Naive thymus-derived CD4-positive, alpha-beta T cell (primary cell): ENCODE measurements at regions of chr7 and their contacts with region 1.

Region 1: GRCh38 chr7:25125137-25125946 is at the start of gene CYCS:
- DNase-seq: peak; percentile 97 to 100 (median 99)
- ATAC-seq: peak; percentile 96
- H3K4me3 ChIP-seq: peak within 1 kb of the TSS; percentile 74
- H3K4me3 Mint-ChIP-seq: peak within 1 kb of the TSS; percentile 88 to 100 (median 100)
- H3K27ac ChIP-seq: peak within 1 kb of the TSS; percentile 93
- H3K27ac Mint-ChIP-seq: peak within 1 kb of the TSS; percentile 98 to 100 (median 100)
- H3K4me1 ChIP-seq: peaks cover 7 to 13% of the 10 kb centered on the region in 2 donors
- H3K4me1 Mint-ChIP-seq: peaks cover 15 to 40% (median 23%) of the 10 kb centered on the region in 7 donors
- H3K27me3 ChIP-seq: no peaks in the 10 kb centered on the region
- H3K27me3 Mint-ChIP-seq: peaks cover 0 to 5% (median 0%) of the 10 kb centered on the region in 5 donors
- total RNA-seq, gene CYCS: 40.4 to 130 (median 114) TPM

Region 2: DNA sequence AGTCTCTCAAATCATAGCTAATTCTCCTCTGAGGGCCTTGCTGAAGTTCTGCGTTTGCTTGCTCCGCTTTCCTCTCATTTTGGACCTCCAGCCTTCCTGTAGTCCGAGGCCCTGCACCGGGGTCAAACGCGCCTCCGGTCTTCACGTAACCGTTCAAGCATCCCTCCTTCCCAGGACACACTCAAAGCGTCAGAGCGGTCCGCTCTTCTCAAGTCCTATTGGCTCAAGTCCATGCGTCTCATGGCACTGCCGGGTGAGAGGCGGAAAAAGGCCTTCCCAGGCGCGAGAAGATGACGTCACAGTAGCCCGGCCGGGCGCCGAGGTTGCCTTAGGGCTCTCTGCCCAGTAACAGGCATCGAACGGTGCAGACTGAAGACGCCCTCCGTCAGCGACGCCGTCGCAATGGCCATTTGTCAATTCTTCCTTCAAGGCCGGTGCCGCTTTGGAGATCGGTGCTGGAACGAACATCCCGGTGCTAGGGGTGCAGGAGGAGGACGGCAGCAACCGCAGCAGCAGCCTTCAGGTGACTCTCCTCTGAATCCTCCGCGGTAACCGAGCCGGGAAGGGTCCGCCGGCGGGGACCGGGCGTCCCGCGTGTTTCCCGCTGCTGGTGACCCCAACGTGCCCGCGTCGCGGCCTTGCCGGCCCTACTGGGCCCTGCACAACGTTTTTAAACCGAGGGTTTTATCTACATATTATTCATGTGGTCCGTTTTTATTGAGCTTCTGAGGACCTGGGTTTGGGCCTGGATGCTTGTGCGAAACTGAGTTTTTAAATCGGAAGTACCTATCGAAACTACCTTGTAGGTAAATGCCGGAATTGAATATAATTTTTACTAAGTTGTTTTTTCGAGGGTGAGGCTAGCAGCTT is 1943.4 kb before region 1 on chr7 and contains the start of gene NUP42:
- CTCF ChIA-PET with region 1: no interaction called
- POLR2A ChIA-PET with region 1: no interaction called
- intact Hi-C with region 1: loop called in 1 of 2 experiments (anchors 2 kb)
- DNase-seq: peak; percentile 87 to 95 (median 93)
- ATAC-seq: peak; percentile 97
- H3K4me3 ChIP-seq: peak within 1 kb of the TSS; percentile 86
- H3K4me3 Mint-ChIP-seq: peak within 1 kb of the TSS; percentile 95 to 100 (median 98)
- H3K27ac ChIP-seq: peak within 1 kb of the TSS; percentile 85
- H3K27ac Mint-ChIP-seq: peak within 1 kb of the TSS; percentile 97 to 99 (median 98)
- H3K4me1 ChIP-seq: peaks cover 16 to 17% of the 10 kb centered on the region in 2 donors
- H3K4me1 Mint-ChIP-seq: peaks cover 20 to 50% (median 43%) of the 10 kb centered on the region in 7 donors
- H3K27me3 ChIP-seq: no peaks in the 10 kb centered on the region
- H3K27me3 Mint-ChIP-seq: peaks cover 0 to 16% (median 0%) of the 10 kb centered on the region in 5 donors
- total RNA-seq, gene NUP42: 19.8 to 37.7 (median 27.5) TPM

Region 3: DNA sequence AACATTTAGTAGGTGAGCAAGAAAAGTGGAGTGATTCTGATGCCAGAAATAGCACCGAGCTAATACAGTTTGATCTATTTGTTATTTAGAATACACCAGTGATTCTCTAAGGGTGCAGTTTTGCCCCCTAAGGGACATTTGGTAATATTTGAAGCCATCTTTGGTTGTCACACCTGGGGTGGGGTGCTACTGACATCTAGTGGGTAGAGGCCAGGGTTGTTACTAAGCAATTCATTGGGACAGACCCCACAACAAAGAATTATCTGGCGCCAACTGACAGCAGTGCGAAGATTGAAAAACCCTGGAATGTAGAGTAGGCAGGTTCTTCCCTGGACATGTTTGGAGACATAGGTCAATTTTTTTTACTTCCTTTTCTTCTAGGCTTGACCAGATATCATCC is 537.5 kb before region 1 on chr7:
- CTCF ChIA-PET with region 1: interaction called, 10 read pairs
- POLR2A ChIA-PET with region 1: no interaction called
- intact Hi-C with region 1: no loop called
- DNase-seq: peak in 8 of 9 donors; percentile 21 to 70 (median 63)
- ATAC-seq: peak; percentile 88
- H3K4me3 ChIP-seq: no peak overlapping the region
- H3K4me3 Mint-ChIP-seq: no peak overlapping the region
- H3K27ac ChIP-seq: no peak overlapping the region
- H3K27ac Mint-ChIP-seq: peak overlapping the region in 2 of 9 donors; percentile 0 to 26
- H3K4me1 ChIP-seq: no peaks in the 10 kb centered on the region
- H3K4me1 Mint-ChIP-seq: peaks cover 7 to 40% (median 27%) of the 10 kb centered on the region in 7 donors
- H3K27me3 ChIP-seq: no peaks in the 10 kb centered on the region
- H3K27me3 Mint-ChIP-seq: no peaks in the 10 kb centered on the region

Region 4: DNA sequence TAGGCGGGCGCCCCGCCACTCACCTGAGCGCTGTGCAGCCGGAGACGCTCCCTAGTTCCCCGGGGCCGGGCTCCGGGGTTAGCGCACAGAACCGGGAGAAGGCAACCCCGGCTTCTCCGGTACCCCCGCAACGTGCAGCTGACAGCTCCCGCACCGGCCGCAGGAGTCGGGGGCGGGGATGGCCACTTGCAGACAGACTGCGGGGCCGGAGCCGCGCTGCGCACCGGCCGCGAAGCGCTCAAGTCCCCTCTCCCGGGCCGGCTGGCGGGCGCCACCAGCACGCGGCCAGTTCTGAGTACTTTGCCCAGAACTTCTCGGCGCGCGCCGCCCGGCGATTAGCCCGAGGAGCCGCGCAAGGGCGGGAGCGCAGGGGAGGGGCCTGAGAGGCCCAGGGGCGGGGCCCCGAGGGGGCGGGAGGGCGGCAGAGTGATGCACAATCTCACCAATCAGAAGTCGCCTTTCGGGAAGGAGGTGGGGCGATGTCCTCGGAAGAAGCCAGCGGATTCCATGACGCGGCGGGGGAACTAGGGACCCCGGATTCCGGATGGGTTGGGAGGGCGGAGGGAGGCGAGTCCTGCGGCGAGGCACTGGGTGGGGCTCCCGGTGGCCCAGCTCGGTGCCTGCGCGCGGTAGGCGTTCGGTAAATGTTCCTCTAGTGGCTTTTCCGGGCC is 145.3 kb before region 1 on chr7 and contains the start of gene OSBPL3:
- CTCF ChIA-PET with region 1: no interaction called
- POLR2A ChIA-PET with region 1: interaction called, 5 read pairs
- intact Hi-C with region 1: loop called (anchors 1 to 2 kb)
- DNase-seq: peak; percentile 86 to 96 (median 93)
- ATAC-seq: peak; percentile 95
- H3K4me3 ChIP-seq: peak within 1 kb of the TSS; percentile 84
- H3K4me3 Mint-ChIP-seq: peak within 1 kb of the TSS; percentile 93 to 97 (median 96)
- H3K27ac ChIP-seq: peak within 1 kb of the TSS; percentile 69
- H3K27ac Mint-ChIP-seq: peak within 1 kb of the TSS; percentile 73 to 95 (median 89)
- H3K4me1 ChIP-seq: peaks cover 26 to 32% of the 10 kb centered on the region in 2 donors
- H3K4me1 Mint-ChIP-seq: peaks cover 40 to 65% (median 56%) of the 10 kb centered on the region in 7 donors
- H3K27me3 ChIP-seq: no peaks in the 10 kb centered on the region
- H3K27me3 Mint-ChIP-seq: peaks cover 0 to 4% (median 0%) of the 10 kb centered on the region in 5 donors
- total RNA-seq, gene OSBPL3: 17.1 to 75.7 (median 22.7) TPM

Region 5: GRCh38 chr7:25179771-25180591 is 54.6 kb after region 1 on chr7:
- CTCF ChIA-PET with region 1: interaction called, 4 read pairs
- POLR2A ChIA-PET with region 1: interaction called, 13 read pairs
- intact Hi-C with region 1: loop called (anchors 1 kb)
- DNase-seq: peak; percentile 88 to 99 (median 94)
- ATAC-seq: peak; percentile 99
- H3K4me3 ChIP-seq: peak overlapping the region; percentile 75
- H3K4me3 Mint-ChIP-seq: peak overlapping the region; percentile 82 to 93 (median 88)
- H3K27ac ChIP-seq: peak overlapping the region; percentile 86
- H3K27ac Mint-ChIP-seq: peak overlapping the region; percentile 83 to 96 (median 92)
- H3K4me1 ChIP-seq: peaks cover 6 to 7% of the 10 kb centered on the region in 2 donors
- H3K4me1 Mint-ChIP-seq: peaks cover 13 to 31% (median 22%) of the 10 kb centered on the region in 7 donors
- H3K27me3 ChIP-seq: no peaks in the 10 kb centered on the region
- H3K27me3 Mint-ChIP-seq: peaks cover 0 to 12% (median 0%) of the 10 kb centered on the region in 5 donors

Region 6: DNA sequence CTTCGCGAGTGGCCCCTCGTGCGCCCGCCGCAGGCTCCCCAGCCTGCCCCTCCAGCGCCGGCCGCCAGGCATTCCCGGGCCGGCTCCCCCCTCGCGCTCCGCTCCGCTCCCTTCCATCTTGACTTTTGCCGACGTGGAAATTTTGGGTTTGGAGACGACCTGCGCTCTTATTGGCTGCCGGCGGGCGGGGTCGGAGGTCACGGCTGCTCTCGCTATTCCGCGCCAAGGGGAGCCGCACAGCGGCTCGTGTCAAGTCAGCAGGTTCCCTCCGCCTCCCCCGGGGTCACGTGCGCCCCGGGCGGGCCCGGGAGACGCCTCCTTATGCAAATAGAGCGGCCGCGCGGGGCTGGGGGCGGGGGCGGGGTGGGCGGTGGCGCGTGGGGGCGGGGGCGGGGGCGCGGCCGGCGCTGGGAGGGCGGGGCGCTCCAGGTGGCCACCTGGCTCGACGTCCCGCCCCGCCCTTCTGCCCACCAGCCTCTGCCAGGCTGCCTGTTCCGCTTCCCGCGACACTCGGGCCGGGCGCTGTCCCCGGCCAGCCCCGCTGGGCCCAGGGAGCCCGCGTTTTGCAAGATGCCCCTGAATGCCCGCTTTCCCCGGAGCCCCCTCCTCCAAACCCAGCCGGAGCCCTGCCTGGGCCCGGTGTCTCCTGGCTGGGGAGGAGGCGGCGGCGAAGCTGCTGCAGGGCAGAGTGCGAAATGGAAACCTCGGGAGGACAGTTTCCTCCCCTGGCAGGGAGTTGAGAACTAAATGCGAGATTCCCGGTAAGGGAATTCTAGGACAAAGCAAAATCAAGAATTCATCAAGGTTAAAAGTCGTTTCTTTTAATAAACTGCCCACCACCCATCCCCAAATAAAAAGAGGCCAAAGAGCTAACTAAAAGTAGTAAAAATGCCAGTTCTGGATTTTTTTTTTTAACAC is 825.9 kb after region 1 on chr7:
- CTCF ChIA-PET with region 1: no interaction called
- POLR2A ChIA-PET with region 1: no interaction called
- intact Hi-C with region 1: loop called in 1 of 2 experiments (anchors 10 kb)
- DNase-seq: peak; percentile 70 to 94 (median 87)
- ATAC-seq: peak; percentile 99
- H3K4me3 ChIP-seq: peak overlapping the region; percentile 61
- H3K4me3 Mint-ChIP-seq: peak overlapping the region; percentile 87 to 94 (median 92)
- H3K27ac ChIP-seq: peak overlapping the region; percentile 52
- H3K27ac Mint-ChIP-seq: peak overlapping the region in 7 of 9 donors; percentile 45 to 87 (median 81)
- H3K4me1 ChIP-seq: peaks cover 7 to 14% of the 10 kb centered on the region in 2 donors
- H3K4me1 Mint-ChIP-seq: peaks cover 16 to 31% (median 20%) of the 10 kb centered on the region in 7 donors
- H3K27me3 ChIP-seq: no peaks in the 10 kb centered on the region
- H3K27me3 Mint-ChIP-seq: peaks cover 0 to 22% (median 5%) of the 10 kb centered on the region in 5 donors